ENCODE measurements at regions of chr19 and their contacts with region 1.

Region 1: DNA sequence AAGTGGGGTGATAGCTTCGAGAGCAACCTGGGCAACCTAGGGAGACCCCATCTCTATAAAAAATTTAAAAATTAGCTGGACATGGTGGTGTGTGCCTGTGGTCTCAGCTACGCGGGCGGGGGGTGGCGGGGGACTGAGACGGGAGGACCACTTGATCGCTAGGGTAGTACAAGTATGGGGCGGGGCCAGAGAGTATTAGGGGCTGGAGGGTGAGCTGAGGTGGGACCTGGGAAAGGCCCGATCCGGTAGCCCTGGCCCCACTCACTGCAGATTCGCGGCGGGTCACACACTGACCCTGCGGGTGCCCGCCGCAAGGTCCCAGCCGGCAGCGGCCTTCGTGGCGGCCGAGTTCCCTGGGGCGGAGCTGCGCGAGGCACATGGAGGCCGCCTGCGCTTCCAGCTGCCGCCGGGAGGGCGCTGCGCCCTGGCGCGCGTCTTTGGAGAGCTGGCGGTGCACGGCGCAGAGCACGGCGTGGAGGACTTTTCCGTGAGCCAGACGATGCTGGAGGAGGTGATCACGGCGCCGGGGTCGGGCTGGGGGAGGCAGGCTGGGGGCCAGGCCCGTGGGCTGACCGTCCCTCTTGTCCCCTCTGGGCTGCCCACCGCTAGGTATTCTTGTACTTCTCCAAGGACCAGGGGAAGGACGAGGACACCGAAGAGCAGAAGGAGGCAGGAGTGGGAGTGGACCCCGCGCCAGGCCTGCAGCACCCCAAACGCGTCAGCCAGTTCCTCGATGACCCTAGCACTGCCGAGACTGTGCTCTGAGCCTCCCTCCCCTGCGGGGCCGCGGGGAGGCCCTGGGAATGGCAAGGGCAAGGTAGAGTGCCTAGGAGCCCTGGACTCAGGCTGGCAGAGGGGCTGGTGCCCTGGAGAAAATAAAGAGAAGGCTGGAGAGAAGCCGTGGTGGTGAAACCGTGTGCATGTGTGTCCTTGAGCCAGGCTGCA is 2.0 kb upstream of the ARHGAP45 start:
- DNase-seq: peak; percentile 76
- ATAC-seq: peak; percentile 25
- H3K4me3 Mint-ChIP-seq: peak overlapping the region; percentile 9
- H3K27ac Mint-ChIP-seq: no peak overlapping the region
- H3K4me1 Mint-ChIP-seq: peaks cover 32% of the 10 kb centered on the region
- H3K27me3 Mint-ChIP-seq: no peaks in the 10 kb centered on the region
- CTCF ChIP-seq: peak; percentile 83

Region 2: DNA sequence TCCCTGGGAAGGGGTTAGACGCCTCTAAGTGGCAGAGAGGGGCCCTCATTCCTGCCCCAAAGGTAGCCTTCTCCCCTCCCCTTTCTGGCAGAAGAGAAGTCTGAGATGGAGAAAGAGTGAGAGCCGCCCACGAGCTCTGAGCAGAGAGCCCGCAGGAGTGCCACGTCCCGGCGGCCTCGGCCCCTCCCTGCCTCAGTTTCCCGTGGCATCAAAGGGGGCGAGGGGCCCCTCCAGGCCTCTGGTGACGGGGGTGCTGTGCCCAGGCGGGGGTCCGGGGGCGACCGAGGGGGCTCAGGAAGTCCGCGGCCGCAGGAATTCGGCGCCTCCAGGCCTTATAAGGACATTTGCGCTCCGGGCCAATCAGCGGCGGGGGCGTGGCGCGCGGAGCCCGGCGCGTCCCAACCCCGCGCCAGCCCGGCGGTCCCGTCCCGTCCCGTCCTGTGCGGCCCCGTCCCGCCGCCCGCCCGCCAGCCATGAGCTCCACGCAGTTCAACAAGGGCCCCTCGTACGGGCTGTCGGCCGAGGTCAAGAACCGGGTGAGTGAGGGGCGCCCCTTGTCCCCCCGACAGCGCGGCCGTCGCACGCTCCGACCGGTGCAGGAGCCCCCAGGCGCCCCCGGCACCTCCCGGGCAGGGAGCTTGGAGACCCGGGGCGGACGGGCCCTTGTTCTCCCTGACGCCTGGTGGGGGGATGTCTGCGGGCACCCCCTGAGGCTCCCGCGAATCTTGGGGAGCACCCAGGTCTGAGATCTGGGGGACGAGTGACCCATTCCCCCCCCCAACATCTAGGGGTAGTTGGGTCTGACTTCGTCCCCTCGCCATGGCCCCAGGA is 38.5 kb before region 1 on chr19 and contains the start of gene CNN2:
- CTCF ChIA-PET with region 1: interaction called, 13 read pairs
- POLR2A ChIA-PET with region 1: interaction called, 11 read pairs
- intact Hi-C with region 1: no loop called
- DNase-seq: peak; percentile 79
- ATAC-seq: peak; percentile 47
- H3K4me3 Mint-ChIP-seq: peak within 1 kb of the TSS; percentile 89
- H3K27ac Mint-ChIP-seq: peak within 1 kb of the TSS; percentile 90
- H3K4me1 Mint-ChIP-seq: peaks cover 31% of the 10 kb centered on the region
- H3K27me3 Mint-ChIP-seq: no peaks in the 10 kb centered on the region
- CTCF ChIP-seq: no peak
- total RNA-seq, gene CNN2: 97.4 to 98.3 TPM

Region 3: DNA sequence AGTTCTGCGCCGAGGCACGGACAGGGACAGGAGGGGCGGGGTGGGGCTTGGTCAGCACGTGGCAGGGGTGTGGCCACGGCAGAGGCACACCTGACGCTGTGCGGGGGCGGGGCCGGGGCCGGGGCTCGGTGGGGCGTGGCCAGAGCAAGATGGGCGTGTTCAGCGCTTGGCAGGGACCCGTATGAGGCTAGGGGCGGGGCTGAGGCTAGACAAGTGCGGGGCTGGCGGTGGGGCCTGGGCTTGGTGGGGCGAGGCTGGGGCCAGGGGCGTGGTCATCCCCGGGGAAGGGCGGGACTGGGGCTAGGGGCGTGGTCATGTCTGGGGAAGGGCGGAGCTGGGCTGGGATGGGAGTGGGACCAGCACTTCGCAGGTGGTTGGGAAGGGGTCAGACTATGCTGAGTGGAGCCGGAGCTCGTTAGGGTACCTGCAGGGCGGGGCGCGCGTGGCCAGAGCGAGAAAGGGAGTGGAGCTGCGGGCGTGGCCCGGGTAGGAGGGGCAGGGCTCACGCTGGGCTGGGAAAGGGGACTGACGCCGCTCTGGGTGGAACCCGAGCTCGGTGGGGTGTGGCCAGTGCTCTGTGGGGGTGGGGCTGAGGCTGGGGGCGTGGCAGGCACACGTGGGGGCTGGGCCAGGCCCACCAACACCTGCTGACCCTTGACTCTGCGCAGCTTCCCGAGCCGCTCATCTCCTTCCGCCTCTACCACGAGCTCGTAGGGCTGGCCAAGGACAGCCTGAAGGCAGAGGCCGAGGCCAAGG is 17.4 kb after region 1 on chr19:
- CTCF ChIA-PET with region 1: interaction called, 22 read pairs
- POLR2A ChIA-PET with region 1: interaction called, 148 read pairs
- intact Hi-C with region 1: no loop called
- DNase-seq: peak; percentile 94
- ATAC-seq: peak; percentile 77
- H3K4me3 Mint-ChIP-seq: no peak overlapping the region
- H3K27ac Mint-ChIP-seq: no peak overlapping the region
- H3K4me1 Mint-ChIP-seq: peaks cover 53% of the 10 kb centered on the region
- H3K27me3 Mint-ChIP-seq: no peaks in the 10 kb centered on the region
- CTCF ChIP-seq: no peak

Region 4: DNA sequence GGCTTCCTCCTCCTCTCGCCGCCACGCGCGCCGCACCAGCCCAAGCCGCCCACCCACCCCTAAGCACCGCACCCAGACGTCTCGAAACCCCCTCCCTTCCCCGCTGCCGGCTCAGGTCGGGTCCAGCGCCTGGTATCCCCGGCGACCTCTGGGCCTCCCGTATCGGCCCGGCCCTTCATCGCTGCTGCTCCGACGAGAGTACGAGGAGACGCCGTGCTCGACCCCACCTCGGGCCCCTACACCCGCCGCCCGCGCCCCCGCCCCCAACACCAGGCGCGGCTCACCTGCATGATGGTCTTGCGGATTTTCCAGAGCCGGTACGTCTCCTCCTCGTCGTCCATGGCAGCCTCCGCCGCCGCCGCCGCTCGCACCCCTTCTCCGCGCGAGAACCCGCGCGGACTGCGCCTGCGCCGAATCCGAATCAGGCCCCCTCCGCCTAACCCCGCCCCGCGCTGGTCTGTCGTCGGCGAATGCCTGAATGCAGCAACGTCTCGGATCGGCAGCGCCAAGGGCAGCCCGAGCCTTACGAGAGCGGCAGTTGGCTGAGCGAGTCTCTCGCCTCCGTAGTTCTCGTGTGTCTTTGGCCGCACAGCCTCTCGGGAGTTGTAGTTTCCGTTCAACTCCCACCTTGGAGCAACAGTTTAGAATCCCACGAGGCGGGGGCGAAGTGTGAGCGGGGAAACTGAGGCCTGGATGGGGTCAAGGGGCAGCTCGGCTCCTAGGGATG is 30.2 kb after region 1 on chr19 and contains the start of gene POLR2E:
- CTCF ChIA-PET with region 1: interaction called, 4 read pairs
- POLR2A ChIA-PET with region 1: interaction called, 148 read pairs
- intact Hi-C with region 1: no loop called
- DNase-seq: peak; percentile 97
- ATAC-seq: peak; percentile 94
- H3K4me3 Mint-ChIP-seq: peak within 1 kb of the TSS; percentile 90
- H3K27ac Mint-ChIP-seq: peak within 1 kb of the TSS; percentile 87
- H3K4me1 Mint-ChIP-seq: peaks cover 64% of the 10 kb centered on the region
- H3K27me3 Mint-ChIP-seq: no peaks in the 10 kb centered on the region
- CTCF ChIP-seq: no peak
- total RNA-seq, gene POLR2E: 271 to 282 TPM